ENCODE measurements at regions of chr7 and their contacts with region 1.

Region 1: GRCh38 chr7:73721377-73721817 is 1.9 kb upstream of the STX1A start:
- DNase-seq: peak; percentile 87 to 96 (median 92)
- ATAC-seq: peak; percentile 80 to 84 (median 80)
- H3K4me3 ChIP-seq: no peak overlapping the region
- H3K27ac ChIP-seq: no peak overlapping the region
- H3K4me1 ChIP-seq: peaks cover 0 to 10% (median 4%) of the 10 kb centered on the region in 4 donors
- H3K27me3 ChIP-seq: no peaks in the 10 kb centered on the region
- CTCF ChIP-seq: no peak
- POLR2A ChIP-seq: no peak

Region 2: DNA sequence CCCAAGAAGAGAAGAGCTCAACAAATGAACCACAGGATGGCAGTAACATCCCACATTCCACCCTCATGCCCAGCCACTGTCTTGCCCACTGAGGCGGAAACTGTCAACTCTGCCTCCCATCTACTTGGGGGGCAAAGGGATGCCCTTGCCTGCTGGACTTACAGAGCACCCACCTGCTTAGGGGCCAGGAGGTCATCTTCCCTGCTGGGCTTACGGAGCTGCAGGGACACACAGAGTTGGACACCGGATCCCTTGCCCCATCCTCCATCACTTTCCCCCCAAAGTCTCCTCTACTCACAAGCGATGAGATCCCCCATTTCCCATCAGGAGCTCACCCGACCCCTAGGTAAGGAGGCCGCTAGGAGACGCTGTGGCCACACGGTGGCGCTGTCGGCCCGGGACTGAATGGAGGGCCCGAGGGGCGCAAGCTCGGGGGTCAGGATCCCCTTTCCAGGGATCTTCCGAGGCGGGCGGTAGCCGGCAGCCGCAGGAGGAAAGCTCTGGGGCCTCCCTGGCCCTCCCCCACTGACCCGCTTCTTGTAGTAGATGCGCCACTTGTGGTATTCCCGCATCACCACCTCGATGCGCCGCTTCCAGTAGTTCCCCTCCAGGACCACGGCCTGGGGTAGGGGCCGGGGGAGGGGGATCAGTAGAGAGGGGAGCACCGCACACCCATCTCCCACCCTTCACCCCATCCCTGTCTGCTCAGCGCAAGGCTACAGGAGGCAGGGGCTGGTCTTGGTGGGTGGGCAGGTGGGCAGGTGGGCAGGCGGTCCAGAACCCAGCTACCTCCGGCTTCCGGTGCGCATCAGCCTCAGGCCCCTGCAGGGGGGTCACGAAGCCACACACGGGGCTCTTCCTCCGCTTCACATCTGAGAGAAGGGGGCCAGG is 114.4 kb before region 1 on chr7:
- intact Hi-C with region 1: loop called in 1 of 2 experiments (anchors 5 kb)
- DNase-seq: peak in 1 of 3 donors; percentile 57
- ATAC-seq: peak; percentile 23 to 46 (median 30)
- H3K4me3 ChIP-seq: no peak overlapping the region
- H3K27ac ChIP-seq: no peak overlapping the region
- H3K4me1 ChIP-seq: peaks cover 0 to 29% (median 12%) of the 10 kb centered on the region in 4 donors
- H3K27me3 ChIP-seq: no peaks in the 10 kb centered on the region
- CTCF ChIP-seq: peak; percentile 75 to 86 (median 83)
- POLR2A ChIP-seq: no peak

Region 3: DNA sequence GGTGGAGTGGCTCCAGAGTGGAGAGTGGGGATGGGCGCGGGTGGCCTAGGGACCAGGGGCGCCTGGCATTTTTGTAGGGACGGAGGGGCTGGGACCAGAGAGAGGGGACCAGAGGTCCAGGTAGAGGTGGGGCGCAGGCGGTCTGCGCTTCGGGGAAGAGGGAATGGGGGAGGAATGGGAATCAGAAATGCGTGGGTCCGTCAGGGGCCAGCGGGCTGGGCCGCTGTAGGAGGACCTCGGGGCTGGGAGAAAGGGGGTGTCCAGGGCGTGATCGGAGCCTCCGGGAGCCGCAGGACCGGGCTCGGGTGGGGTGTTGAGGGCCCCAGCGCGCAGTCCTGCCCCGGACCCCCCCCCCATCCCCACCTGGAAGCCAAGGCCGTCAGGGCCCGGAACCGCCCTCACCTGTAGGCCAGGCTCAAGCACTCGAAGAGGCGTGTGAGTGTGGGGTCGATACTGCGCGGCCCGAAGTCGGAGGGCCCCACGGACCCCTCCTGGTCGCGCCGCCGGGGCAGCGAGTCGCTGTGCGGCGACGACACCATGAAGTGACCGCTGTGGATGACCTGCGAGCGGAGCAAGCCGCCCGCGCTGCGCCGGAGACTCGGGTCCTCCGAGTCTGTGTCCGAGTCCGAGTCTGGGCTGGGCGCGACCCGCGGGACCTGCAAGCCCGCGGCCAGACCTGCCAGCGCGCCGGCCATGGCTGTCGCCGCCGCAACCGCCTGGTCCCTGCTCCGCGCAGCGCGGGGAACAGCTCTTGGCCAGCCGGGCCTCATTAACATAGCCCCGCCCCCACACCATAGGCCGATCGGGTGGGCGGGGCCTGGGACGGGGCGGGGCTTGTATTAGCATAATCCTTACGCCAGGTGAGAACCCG is 97.4 kb before region 1 on chr7 and contains the start of gene MLXIPL:
- intact Hi-C with region 1: loop called in 1 of 2 experiments (anchors 10 kb)
- DNase-seq: peak; percentile 92 to 96 (median 95)
- ATAC-seq: peak; percentile 70 to 87 (median 78)
- H3K4me3 ChIP-seq: peak within 1 kb of the TSS; percentile 59 to 91 (median 89)
- H3K27ac ChIP-seq: peak within 1 kb of the TSS; percentile 51 to 83 (median 74)
- H3K4me1 ChIP-seq: peaks cover 0 to 22% (median 3%) of the 10 kb centered on the region in 4 donors
- H3K27me3 ChIP-seq: no peaks in the 10 kb centered on the region
- CTCF ChIP-seq: no peak
- POLR2A ChIP-seq: peak; percentile 93
- total RNA-seq, gene MLXIPL: 53.5 to 552 (median 225) TPM

Region 4: DNA sequence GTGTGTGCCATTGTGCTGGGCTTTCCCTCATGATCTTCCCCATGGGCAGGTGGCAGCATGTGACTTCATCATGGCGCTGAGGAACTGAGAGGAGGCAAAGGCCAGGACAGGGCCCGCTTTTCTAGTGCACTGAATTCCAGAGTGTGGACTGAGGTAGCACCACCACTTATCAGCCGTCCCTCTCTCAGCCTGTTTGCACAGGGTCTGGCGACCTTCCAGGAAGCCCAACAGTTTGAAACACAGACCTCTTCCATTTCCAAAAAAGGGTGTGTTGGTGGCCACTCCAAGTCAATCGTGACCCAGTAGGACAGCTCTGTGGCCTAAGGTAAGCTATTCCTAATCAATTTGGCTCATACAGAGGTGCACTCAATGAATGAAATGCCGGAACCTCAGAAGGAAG is 42.5 kb before region 1 on chr7:
- intact Hi-C with region 1: loop called in 1 of 2 experiments (anchors 10 kb)
- DNase-seq: no peak
- ATAC-seq: no peak
- H3K4me3 ChIP-seq: no peak overlapping the region
- H3K27ac ChIP-seq: no peak overlapping the region
- H3K4me1 ChIP-seq: peaks cover 0 to 26% (median 12%) of the 10 kb centered on the region in 4 donors
- H3K27me3 ChIP-seq: no peaks in the 10 kb centered on the region
- CTCF ChIP-seq: no peak
- POLR2A ChIP-seq: no peak

Measured in right lobe of liver (tissue), 6 donors.